GM12878 (cell line): ENCODE measurements at regions of chr4 and their contacts with region 1.

Region 1: DNA sequence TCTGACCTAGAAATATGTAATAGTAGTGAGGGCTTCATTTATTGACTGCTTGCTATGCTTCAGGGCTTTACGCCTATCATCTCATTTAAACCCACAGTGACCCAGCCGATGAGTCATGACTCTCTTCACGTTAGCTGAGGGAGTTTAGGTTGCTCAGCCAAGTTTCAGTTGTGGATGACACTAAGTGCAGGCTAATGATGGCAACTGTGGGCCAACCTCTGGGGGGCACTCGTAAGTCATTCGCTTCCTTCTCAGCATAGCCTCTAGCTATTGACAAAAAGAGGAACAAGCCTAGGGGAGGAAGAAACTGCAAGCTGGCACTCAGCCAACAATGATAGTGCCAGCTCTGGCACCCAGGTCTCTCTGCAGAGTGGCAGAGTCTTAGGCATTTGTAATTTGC is 325.0 kb downstream of the ARHGAP10 start:
- DNase-seq: peak; percentile 95
- ATAC-seq: peak; percentile 97
- H3K4me3 ChIP-seq: no peak overlapping the region
- H3K27ac ChIP-seq: no peak overlapping the region
- H3K4me1 ChIP-seq: peaks cover 36% of the 10 kb centered on the region
- H3K27me3 ChIP-seq: no peaks in the 10 kb centered on the region
- CTCF ChIP-seq: peak; percentile 68 to 83 (median 79)
- EP300 ChIP-seq: peak in 1 of 2 experiments; percentile 34; a peak in 1 of 4 replicates
- POLR2A ChIP-seq: no peak
- RAD21 ChIP-seq: peak; percentile 57

Region 2: DNA sequence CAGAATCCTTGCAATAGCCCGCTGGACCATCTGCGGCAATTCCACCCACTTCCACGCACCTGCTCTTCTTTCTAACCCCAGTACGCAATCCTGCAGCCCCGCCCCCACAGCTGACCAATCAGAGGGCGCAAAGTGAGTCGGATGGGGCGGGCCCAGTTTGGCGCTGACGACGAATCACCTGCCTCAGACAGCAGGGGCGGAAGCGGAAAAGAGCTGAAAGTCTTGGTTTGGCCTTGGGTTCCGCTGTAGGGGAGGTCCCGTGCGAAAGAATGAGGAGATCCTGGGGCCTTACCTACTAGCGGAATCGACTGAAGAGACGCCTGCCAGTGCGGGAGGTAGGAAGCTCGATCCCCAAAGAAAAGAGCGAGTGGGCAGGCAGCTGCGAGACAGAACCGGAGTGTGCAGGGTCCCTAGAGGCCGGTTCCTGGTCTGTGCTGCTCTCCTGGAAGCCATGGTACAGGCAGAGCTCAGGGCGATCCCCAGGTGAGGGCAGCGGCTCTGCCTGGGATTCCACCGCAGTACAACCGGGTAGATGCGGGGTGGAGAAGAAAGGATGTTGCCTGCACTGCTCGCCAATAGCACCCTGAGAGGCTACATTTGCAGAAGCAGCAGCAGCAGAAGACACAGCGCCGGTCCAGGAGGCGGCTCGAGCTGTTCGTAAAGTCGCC is 439.6 kb before region 1 on chr4 and contains the start of gene TMEM184C:
- CTCF ChIA-PET with region 1: no interaction called
- POLR2A ChIA-PET with region 1: no interaction called
- RAD21 ChIA-PET with region 1: no interaction called
- SMC1A ChIA-PET with region 1: no interaction called
- in situ Hi-C with region 1: no loop called
- intact Hi-C with region 1: loop called (anchors 10 kb)
- DNase-seq: peak; percentile 89
- ATAC-seq: peak; percentile 98
- H3K4me3 ChIP-seq: peak within 1 kb of the TSS; percentile 76
- H3K27ac ChIP-seq: peak within 1 kb of the TSS; percentile 90
- H3K4me1 ChIP-seq: no peaks in the 10 kb centered on the region
- H3K27me3 ChIP-seq: no peaks in the 10 kb centered on the region
- CTCF ChIP-seq: no peak
- EP300 ChIP-seq: peak in 1 of 2 experiments; percentile 14; a peak in 1 of 4 replicates
- POLR2A ChIP-seq: peak; percentile 93
- RAD21 ChIP-seq: no peak
- polyA plus RNA-seq, gene TMEM184C: 3.4 to 4.1 TPM

Region 3: GRCh38 chr4:147924604-147925412 is 132.1 kb before region 1 on chr4:
- CTCF ChIA-PET with region 1: interaction called, 11 read pairs
- POLR2A ChIA-PET with region 1: no interaction called
- RAD21 ChIA-PET with region 1: no interaction called
- SMC1A ChIA-PET with region 1: interaction called, 4 read pairs
- in situ Hi-C with region 1: no loop called
- intact Hi-C with region 1: no loop called
- DNase-seq: no peak
- ATAC-seq: peak; percentile 68; the same call in 2 of the 3 replicates
- H3K4me3 ChIP-seq: no peak overlapping the region
- H3K27ac ChIP-seq: no peak overlapping the region
- H3K4me1 ChIP-seq: peaks cover 3% of the 10 kb centered on the region; the same call in 1 of the 2 replicates
- H3K27me3 ChIP-seq: no peaks in the 10 kb centered on the region
- CTCF ChIP-seq: peak; percentile 30 to 49 (median 30); a peak in 4 of 6 replicates
- EP300 ChIP-seq: no peak
- POLR2A ChIP-seq: no peak
- RAD21 ChIP-seq: peak; percentile 49

Region 4: GRCh38 chr4:147943159-147943638 is 113.7 kb before region 1 on chr4:
- CTCF ChIA-PET with region 1: interaction called, 8 read pairs
- POLR2A ChIA-PET with region 1: interaction called, 3 read pairs
- RAD21 ChIA-PET with region 1: interaction called, 9 read pairs
- SMC1A ChIA-PET with region 1: interaction called, 7 read pairs
- in situ Hi-C with region 1: no loop called
- intact Hi-C with region 1: loop called (anchors 5 kb)
- DNase-seq: peak; percentile 62
- ATAC-seq: peak; percentile 93
- H3K4me3 ChIP-seq: peak overlapping the region; percentile 13; the same call in 1 of the 2 replicates
- H3K27ac ChIP-seq: peak overlapping the region; percentile 59
- H3K4me1 ChIP-seq: peaks cover 21% of the 10 kb centered on the region
- H3K27me3 ChIP-seq: no peaks in the 10 kb centered on the region
- CTCF ChIP-seq: no peak
- EP300 ChIP-seq: peak; percentile 81 to 88
- POLR2A ChIP-seq: no peak
- RAD21 ChIP-seq: no peak

Region 5: GRCh38 chr4:147984065-147984777 is 72.6 kb before region 1 on chr4:
- CTCF ChIA-PET with region 1: interaction called, 11 read pairs
- POLR2A ChIA-PET with region 1: no interaction called
- RAD21 ChIA-PET with region 1: no interaction called
- SMC1A ChIA-PET with region 1: interaction called, 5 read pairs
- in situ Hi-C with region 1: no loop called
- intact Hi-C with region 1: no loop called
- DNase-seq: no peak
- ATAC-seq: peak; percentile 31; the same call in 2 of the 3 replicates
- H3K4me3 ChIP-seq: no peak overlapping the region
- H3K27ac ChIP-seq: no peak overlapping the region
- H3K4me1 ChIP-seq: peaks cover 9% of the 10 kb centered on the region; the same call in 1 of the 2 replicates
- H3K27me3 ChIP-seq: no peaks in the 10 kb centered on the region
- CTCF ChIP-seq: peak; percentile 45 to 56 (median 53)
- EP300 ChIP-seq: no peak
- POLR2A ChIP-seq: no peak
- RAD21 ChIP-seq: peak; percentile 64

Region 6: GRCh38 chr4:148044912-148045352 is 11.9 kb before region 1 on chr4:
- CTCF ChIA-PET with region 1: interaction called, 25 read pairs
- POLR2A ChIA-PET with region 1: no interaction called
- RAD21 ChIA-PET with region 1: interaction called, 5 read pairs
- SMC1A ChIA-PET with region 1: interaction called, 13 read pairs
- in situ Hi-C with region 1: no loop called
- intact Hi-C with region 1: no loop called
- DNase-seq: peak; percentile 43
- ATAC-seq: peak; percentile 94
- H3K4me3 ChIP-seq: no peak overlapping the region
- H3K27ac ChIP-seq: no peak overlapping the region
- H3K4me1 ChIP-seq: peaks cover 7% of the 10 kb centered on the region
- H3K27me3 ChIP-seq: no peaks in the 10 kb centered on the region
- CTCF ChIP-seq: peak; percentile 21 to 30 (median 22); a peak in 3 of 6 replicates
- EP300 ChIP-seq: no peak
- POLR2A ChIP-seq: no peak
- RAD21 ChIP-seq: peak; percentile 30; the same call in 1 of the 2 replicates

Region 7: GRCh38 chr4:148071009-148071408 is 14.1 kb after region 1 on chr4:
- CTCF ChIA-PET with region 1: no interaction called
- POLR2A ChIA-PET with region 1: no interaction called
- RAD21 ChIA-PET with region 1: no interaction called
- SMC1A ChIA-PET with region 1: no interaction called
- in situ Hi-C with region 1: no loop called
- intact Hi-C with region 1: no loop called
- DNase-seq: no peak
- ATAC-seq: no peak
- H3K4me3 ChIP-seq: no peak overlapping the region
- H3K27ac ChIP-seq: no peak overlapping the region
- H3K4me1 ChIP-seq: no peaks in the 10 kb centered on the region
- H3K27me3 ChIP-seq: no peaks in the 10 kb centered on the region
- CTCF ChIP-seq: no peak
- EP300 ChIP-seq: no peak
- POLR2A ChIP-seq: no peak
- RAD21 ChIP-seq: no peak

Region 8: GRCh38 chr4:148441986-148442831 is 385.3 kb after region 1 on chr4 and contains the start of gene NR3C2:
- CTCF ChIA-PET with region 1: interaction called, 5 read pairs
- POLR2A ChIA-PET with region 1: no interaction called
- RAD21 ChIA-PET with region 1: no interaction called
- SMC1A ChIA-PET with region 1: no interaction called
- in situ Hi-C with region 1: loop called (anchors 5 kb)
- intact Hi-C with region 1: loop called (anchors 5 kb)
- DNase-seq: peak; percentile 78
- ATAC-seq: peak; percentile 98
- H3K4me3 ChIP-seq: peak within 1 kb of the TSS; percentile 77
- H3K27ac ChIP-seq: no peak within 1 kb of the TSS
- H3K4me1 ChIP-seq: peaks cover 4% of the 10 kb centered on the region
- H3K27me3 ChIP-seq: peaks cover 4 to 28% of the 10 kb centered on the region in 2 experiments; a peak in 3 of 4 replicates
- CTCF ChIP-seq: no peak
- EP300 ChIP-seq: no peak
- POLR2A ChIP-seq: peak; percentile 91
- RAD21 ChIP-seq: no peak
- polyA plus RNA-seq, gene NR3C2: 0.11 TPM in 1 of 2 experiments, not detected in the other